BJ (cell line): ENCODE measurements at regions of chr14 and their contacts with region 1.

Region 1: DNA sequence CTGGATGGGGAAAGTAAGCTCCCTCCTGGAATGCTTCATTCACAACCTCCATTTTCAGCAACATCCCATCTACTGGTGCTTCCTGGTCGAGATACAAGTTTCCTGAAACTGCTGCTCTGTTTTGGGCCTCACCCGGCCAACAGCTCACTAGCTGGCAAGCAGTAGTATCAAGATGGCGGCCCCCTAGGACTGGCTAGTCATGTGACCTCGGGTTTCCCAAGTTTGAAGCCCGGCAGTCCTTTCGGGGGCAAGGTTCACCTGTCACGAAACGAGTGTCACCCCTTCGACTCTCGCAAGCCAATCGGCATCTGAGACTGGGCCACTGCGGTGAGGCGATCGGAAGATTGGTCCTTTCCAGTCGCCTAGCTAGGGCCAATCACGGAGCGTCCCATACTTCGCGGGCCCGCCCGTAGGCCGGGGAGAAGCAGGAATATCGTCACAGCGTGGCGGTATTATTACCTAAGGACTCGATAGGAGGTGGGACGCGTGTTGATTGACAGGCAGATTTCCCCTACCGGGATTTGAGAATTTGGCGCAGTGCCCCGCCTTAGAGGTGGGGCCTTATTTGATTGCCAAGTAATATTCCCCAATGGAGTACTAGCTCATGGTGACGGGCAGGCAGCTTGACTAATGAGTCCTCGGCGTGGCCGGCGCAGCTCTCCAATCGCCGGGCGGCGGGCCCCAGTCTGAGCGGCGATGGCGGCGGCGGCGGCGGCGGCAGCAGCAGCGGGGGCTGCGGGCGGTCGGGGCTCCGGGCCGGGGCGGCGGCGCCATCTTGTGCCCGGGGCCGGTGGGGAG is at the start of gene PABPN1:
- DNase-seq: peak; percentile 98
- H3K4me3 ChIP-seq: peak within 1 kb of the TSS; percentile 60
- H3K27me3 ChIP-seq: no peaks in the 10 kb centered on the region
- CTCF ChIP-seq: no peak
- polyA plus RNA-seq, gene PABPN1: 119 and 143 TPM in 2 replicates

Region 2: GRCh38 chr14:23154964-23155587 is 165.9 kb before region 1 on chr14:
- CTCF ChIA-PET with region 1: no interaction called
- POLR2A ChIA-PET with region 1: no interaction called
- DNase-seq: no peak
- H3K4me3 ChIP-seq: no peak overlapping the region
- H3K27me3 ChIP-seq: no peaks in the 10 kb centered on the region
- CTCF ChIP-seq: 0 out of 2 replicates have a peak, but pooled peaks have one; percentile 3

Region 3: GRCh38 chr14:23306410-23307145 is 14.4 kb before region 1 on chr14 and contains the start of gene BCL2L2:
- CTCF ChIA-PET with region 1: interaction called, 3 read pairs
- POLR2A ChIA-PET with region 1: interaction called, 10 read pairs
- DNase-seq: peak; percentile 37
- H3K4me3 ChIP-seq: peak within 1 kb of the TSS; percentile 91
- H3K27me3 ChIP-seq: no peaks in the 10 kb centered on the region
- CTCF ChIP-seq: no peak
- polyA plus RNA-seq, gene BCL2L2: 26.5 and 27.9 TPM in 2 replicates

Region 4: GRCh38 chr14:23539248-23540140 is 218.5 kb after region 1 on chr14:
- CTCF ChIA-PET with region 1: no interaction called
- POLR2A ChIA-PET with region 1: no interaction called
- DNase-seq: no peak
- H3K4me3 ChIP-seq: no peak overlapping the region
- H3K27me3 ChIP-seq: no peaks in the 10 kb centered on the region
- CTCF ChIP-seq: peak; percentile 63